CD8-positive, alpha-beta memory T cell (primary cell): ENCODE measurements at regions of chr6 and their contacts with region 1.

Region 1: GRCh38 chr6:37241775-37242428 is 15.7 kb upstream of the TBC1D22B start:
- DNase-seq: no peak
- H3K4me3 ChIP-seq: no peak overlapping the region
- H3K4me3 Mint-ChIP-seq: no peak overlapping the region
- H3K27ac ChIP-seq: peak overlapping the region; percentile 18
- H3K27ac Mint-ChIP-seq: no peak overlapping the region
- H3K4me1 ChIP-seq: peaks cover 11% of the 10 kb centered on the region
- H3K4me1 Mint-ChIP-seq: peaks cover 7 to 12% (median 11%) of the 10 kb centered on the region in 3 donors
- H3K27me3 ChIP-seq: no peaks in the 10 kb centered on the region
- H3K27me3 Mint-ChIP-seq: peaks cover 3 to 6% of the 10 kb centered on the region in 2 donors

Region 2: GRCh38 chr6:36929607-36930006 is 312.3 kb before region 1 on chr6:
- CTCF ChIA-PET with region 1: no interaction called
- POLR2A ChIA-PET with region 1: no interaction called
- DNase-seq: no peak
- H3K4me3 ChIP-seq: no peak overlapping the region
- H3K4me3 Mint-ChIP-seq: no peak overlapping the region
- H3K27ac ChIP-seq: no peak overlapping the region
- H3K27ac Mint-ChIP-seq: peak overlapping the region in 3 of 8 donors; percentile 12 to 24 (median 23)
- H3K4me1 ChIP-seq: no peaks in the 10 kb centered on the region
- H3K4me1 Mint-ChIP-seq: peaks cover 0 to 5% (median under 1%) of the 10 kb centered on the region in 3 donors
- H3K27me3 ChIP-seq: no peaks in the 10 kb centered on the region
- H3K27me3 Mint-ChIP-seq: no peaks in the 10 kb centered on the region

Region 3: GRCh38 chr6:37262446-37263026 is 20.6 kb after region 1 on chr6:
- CTCF ChIA-PET with region 1: interaction called, 3 read pairs
- POLR2A ChIA-PET with region 1: interaction called, 10 read pairs
- DNase-seq: no peak
- H3K4me3 ChIP-seq: no peak overlapping the region
- H3K4me3 Mint-ChIP-seq: no peak overlapping the region
- H3K27ac ChIP-seq: no peak overlapping the region
- H3K27ac Mint-ChIP-seq: peak overlapping the region in 2 of 8 donors; percentile 8 to 23
- H3K4me1 ChIP-seq: peaks cover 21% of the 10 kb centered on the region
- H3K4me1 Mint-ChIP-seq: peaks cover 49 to 74% (median 66%) of the 10 kb centered on the region in 3 donors
- H3K27me3 ChIP-seq: no peaks in the 10 kb centered on the region
- H3K27me3 Mint-ChIP-seq: no peaks in the 10 kb centered on the region